Activated CD4-positive, alpha-beta T cell treated with anti-CD3 and anti-CD28 coated beads, Interleukin-2, amount 10 ng/mL, durations not matched to agents 24 days and 14 days (primary cell): ENCODE measurements at regions of chr1 and their contacts with region 1.

Region 1: GRCh38 chr1:19661721-19662228 is 2.9 kb upstream of the HTR6 start:
- DNase-seq: peak; percentile 84
- H3K4me3 Mint-ChIP-seq: no peak overlapping the region
- H3K27ac Mint-ChIP-seq: no peak overlapping the region
- H3K4me1 Mint-ChIP-seq: peaks cover 15% of the 10 kb centered on the region
- H3K27me3 Mint-ChIP-seq: peaks cover 34% of the 10 kb centered on the region

Region 2: DNA sequence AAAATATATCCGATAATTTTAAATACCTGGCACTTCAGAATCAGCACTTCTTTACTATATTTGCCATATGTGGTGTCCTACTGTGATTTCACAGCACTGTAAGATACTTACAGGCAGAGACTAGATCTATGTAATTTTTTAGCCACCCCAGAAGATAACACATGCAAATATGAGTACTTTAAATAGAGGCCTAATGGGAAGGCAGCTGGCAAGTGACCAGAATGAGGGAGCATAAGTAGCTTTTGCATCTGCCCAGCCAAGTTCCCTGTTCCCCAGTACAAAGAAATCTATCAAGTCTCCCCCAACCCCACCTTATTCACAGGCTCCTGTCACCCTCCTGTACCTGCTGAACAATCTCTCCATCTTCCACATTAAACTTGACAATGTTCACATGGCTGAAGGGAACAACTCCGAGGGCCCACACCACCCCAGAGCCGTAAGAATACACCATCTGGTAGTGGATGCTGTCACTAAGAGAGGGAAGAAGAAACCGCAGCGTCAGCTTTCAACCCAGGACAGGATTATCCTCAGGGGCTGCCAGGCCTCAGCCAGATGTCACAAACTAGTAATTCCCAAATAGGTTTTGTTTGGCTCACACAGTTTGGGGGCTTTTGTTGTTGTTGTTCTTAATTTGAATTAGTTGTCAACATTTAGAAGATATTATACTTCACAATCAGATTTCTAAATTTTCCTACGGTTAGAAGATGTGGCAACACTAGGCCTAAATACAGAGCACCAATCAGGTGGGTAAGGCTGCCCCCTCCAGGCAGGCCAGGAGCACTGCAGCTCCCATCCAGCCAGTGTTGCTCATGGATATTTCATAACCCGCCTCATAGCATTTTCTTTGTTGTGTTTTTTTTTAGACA is 420.9 kb before region 1 on chr1:
- intact Hi-C with region 1: no loop called
- DNase-seq: peak; percentile 92
- H3K4me3 Mint-ChIP-seq: no peak overlapping the region
- H3K27ac Mint-ChIP-seq: no peak overlapping the region
- H3K4me1 Mint-ChIP-seq: no peaks in the 10 kb centered on the region
- H3K27me3 Mint-ChIP-seq: no peaks in the 10 kb centered on the region

Region 3: DNA sequence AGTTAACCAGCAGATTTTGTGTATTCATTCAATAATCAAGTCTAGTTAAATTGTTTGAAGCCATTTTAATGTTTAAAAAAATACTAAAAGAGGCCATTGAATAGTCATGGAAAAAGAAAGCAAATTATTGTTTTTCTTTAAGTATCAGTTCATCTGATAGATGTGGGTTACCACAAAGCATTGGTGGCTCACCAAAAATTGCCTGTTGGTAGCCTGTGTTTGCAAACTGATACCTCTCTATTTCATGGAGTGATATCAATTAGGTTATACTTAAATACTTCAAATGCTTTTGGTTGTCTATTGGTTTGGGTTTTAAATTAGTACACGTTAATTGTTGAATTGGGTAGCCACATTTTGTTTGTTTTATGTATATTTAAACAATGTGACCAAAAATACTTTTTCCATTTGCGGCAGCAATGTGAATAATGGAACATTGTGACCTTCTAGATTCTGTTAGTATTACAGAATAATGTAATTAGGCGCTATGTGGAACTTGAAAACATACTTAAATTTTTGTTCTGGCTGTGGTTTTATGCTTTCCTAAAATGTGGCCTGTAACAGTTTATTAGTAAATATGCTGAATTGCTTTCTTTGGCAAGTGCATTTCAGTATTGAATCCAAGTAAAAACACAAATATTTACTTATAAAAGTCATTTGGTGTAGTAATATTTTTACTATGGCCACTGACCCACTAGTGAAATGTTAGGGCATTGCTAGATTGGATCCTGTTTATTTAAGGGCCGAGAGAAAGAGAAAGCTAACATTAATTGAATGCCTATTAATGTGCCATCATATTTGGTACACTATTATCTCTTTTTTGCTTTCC is 54.7 kb before region 1 on chr1:
- intact Hi-C with region 1: no loop called
- DNase-seq: peak; percentile 91
- H3K4me3 Mint-ChIP-seq: peak overlapping the region; percentile 41
- H3K27ac Mint-ChIP-seq: peak overlapping the region; percentile 65
- H3K4me1 Mint-ChIP-seq: peaks cover 39% of the 10 kb centered on the region
- H3K27me3 Mint-ChIP-seq: no peaks in the 10 kb centered on the region

Region 4: GRCh38 chr1:19682257-19682656 is 20.5 kb after region 1 on chr1:
- intact Hi-C with region 1: no loop called
- DNase-seq: no peak
- H3K4me3 Mint-ChIP-seq: no peak overlapping the region
- H3K27ac Mint-ChIP-seq: no peak overlapping the region
- H3K4me1 Mint-ChIP-seq: no peaks in the 10 kb centered on the region
- H3K27me3 Mint-ChIP-seq: peaks cover 2% of the 10 kb centered on the region

Region 5: GRCh38 chr1:19704247-19705113 is 42.7 kb after region 1 on chr1:
- intact Hi-C with region 1: loop called (anchors 1 kb)
- DNase-seq: peak; percentile 81
- H3K4me3 Mint-ChIP-seq: no peak overlapping the region
- H3K27ac Mint-ChIP-seq: no peak overlapping the region
- H3K4me1 Mint-ChIP-seq: peaks cover 3% of the 10 kb centered on the region
- H3K27me3 Mint-ChIP-seq: no peaks in the 10 kb centered on the region

Region 6: DNA sequence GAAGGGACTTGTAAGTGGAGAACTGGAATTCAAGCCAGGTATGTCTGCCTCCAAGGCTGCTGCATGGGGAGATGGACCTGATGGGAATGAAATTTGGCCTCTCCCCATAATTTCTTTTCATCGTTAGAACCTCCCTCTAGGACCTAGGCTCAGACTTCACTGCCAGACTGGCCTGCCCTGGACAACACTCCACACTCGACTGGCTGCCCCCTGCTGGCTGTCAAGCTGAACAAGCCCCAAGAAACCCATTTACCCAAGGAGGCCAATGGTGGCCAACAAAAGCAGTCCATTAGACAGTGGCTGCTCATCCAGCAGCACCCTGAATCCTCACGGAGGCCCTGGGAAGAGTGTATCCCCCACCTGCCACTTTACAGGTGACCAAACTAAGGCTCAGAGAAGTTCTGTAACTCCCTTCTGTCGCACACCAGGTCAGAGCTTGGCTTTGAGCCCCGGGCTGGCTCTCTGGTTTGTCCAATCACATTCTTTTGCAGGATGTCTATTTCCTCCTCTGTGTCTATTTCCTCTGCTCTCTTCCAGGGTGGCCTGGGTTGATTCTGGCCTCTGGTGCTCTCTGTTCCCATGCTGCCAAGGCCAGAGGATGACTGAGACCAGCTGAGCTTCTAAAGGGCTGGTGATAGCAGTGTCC is 149.6 kb after region 1 on chr1:
- intact Hi-C with region 1: loop called (anchors 2 kb)
- DNase-seq: peak; percentile 85
- H3K4me3 Mint-ChIP-seq: no peak overlapping the region
- H3K27ac Mint-ChIP-seq: no peak overlapping the region
- H3K4me1 Mint-ChIP-seq: no peaks in the 10 kb centered on the region
- H3K27me3 Mint-ChIP-seq: no peaks in the 10 kb centered on the region